Activated CD4-positive, alpha-beta T cell treated with anti-CD3 and anti-CD28 coated beads for 36 hours (primary cell): ENCODE measurements at regions of chr10 and their contacts with region 1.

Region 1: GRCh38 chr10:114103284-114103683 is 59.6 kb downstream of the ADRB1 start:
- DNase-seq: no peak
- ATAC-seq: no peak
- H3K4me3 Mint-ChIP-seq: no peak overlapping the region
- H3K27ac Mint-ChIP-seq: no peak overlapping the region
- H3K4me1 Mint-ChIP-seq: peaks cover 22% of the 10 kb centered on the region
- H3K27me3 Mint-ChIP-seq: peaks cover 30% of the 10 kb centered on the region

Region 2: GRCh38 chr10:113704637-113705343 is 398.5 kb before region 1 on chr10:
- CTCF ChIA-PET with region 1: interaction called, 8 read pairs
- POLR2A ChIA-PET with region 1: no interaction called
- intact Hi-C with region 1: loop called (anchors 1 kb)
- DNase-seq: peak; percentile 41
- ATAC-seq: no peak
- H3K4me3 Mint-ChIP-seq: no peak overlapping the region
- H3K27ac Mint-ChIP-seq: no peak overlapping the region
- H3K4me1 Mint-ChIP-seq: peaks cover 29% of the 10 kb centered on the region
- H3K27me3 Mint-ChIP-seq: no peaks in the 10 kb centered on the region